ENCODE measurements at regions of chr1 and their contacts with region 1.

Region 1: GRCh38 chr1:168767894-168768584 is 39.0 kb upstream of the DPT start:
- DNase-seq: no peak
- ATAC-seq: peak; percentile 91

Region 2: DNA sequence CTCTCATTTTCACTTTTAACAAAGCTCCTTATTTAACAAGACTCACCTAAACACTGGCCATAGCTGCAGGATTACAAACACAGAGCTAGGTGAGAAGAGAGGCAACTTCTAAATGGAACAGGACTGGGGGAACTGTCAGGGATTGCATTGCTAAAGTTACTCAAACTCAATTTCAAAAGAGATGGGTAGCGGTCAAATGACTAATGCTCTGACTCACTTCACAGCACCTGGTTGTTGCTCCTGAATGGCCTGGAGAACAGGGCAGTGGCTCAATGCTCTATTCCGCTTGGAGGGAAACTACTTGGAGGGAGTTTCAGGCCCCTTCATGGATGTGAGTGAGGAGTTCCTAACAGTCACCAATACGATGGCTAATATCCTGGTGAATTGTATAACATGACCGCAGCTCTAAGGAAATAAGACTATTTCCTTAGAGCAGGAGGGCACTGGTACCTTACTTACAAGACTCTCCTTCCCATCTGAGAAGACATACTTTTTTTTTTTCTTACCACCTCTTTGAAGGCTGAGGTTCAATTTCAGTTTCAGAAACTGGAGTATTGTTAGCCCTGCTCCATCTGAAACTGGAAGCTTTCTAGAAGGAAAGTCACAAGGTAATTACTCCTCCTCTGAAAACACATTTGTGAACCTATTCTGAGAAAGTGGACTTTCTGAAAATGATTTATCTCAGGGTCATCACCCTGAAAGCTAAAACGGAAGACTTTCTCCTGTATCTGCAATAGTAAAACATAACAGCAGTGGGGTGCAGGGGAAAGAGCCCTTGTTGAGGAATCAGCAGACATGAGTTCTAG is 48.5 kb before region 1 on chr1:
- intact Hi-C with region 1: loop called (anchors 1 kb)
- DNase-seq: no peak
- ATAC-seq: no peak

Region 3: GRCh38 chr1:168734946-168735345 is 33.1 kb before region 1 on chr1:
- intact Hi-C with region 1: loop called (anchors 5 kb)
- DNase-seq: no peak
- ATAC-seq: no peak

Measured in Right ventricle myocardium inferior (tissue), 1 donor.